Right cardiac atrium (tissue), 5 donors: ENCODE measurements at regions of chr1 and their contacts with region 1.

Region 1: DNA sequence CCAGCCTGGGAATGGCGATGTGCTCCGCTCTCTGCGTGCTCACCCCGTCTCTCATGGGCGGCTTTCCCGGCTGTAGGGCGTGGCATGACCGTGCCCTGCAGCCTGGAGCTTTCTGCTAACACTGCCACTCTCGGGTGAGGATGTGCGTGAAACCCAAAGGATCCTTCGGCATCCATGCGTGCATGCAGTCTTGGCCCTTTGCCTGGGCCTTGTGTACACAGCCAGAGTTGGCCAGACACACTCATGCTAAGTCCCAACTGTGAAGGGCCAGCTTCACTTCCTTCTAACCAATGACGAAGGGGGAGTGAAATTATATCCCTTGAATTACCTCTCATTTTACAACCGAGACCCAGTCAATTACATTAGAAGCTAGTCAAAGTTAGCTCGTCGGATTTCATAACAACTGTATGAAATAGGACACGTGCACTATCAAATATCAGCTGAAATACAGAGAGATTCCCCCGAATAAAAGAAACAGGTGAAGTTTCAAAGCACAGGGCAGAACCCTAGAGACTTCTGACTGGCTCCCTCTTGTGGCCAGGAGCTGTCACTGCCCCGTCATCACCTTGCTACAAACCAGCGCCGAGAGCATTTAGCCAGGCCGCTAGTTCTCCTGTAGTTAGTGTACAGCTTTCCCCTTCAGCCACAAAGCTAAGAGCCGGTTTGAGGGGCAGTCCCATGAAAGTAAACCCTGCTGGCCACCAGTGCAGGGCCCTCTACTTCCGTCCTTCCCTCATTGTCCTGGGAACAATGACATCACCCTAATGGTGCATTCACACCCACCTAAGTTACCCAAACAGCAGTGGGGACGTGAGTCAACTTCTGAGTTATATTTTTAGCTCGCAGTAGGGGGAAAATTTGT is 63.4 kb upstream of the COA6 start:
- DNase-seq: peak; percentile 31 to 83 (median 63)
- ATAC-seq: peak; percentile 69 to 78
- H3K4me3 ChIP-seq: no peak overlapping the region
- H3K27ac ChIP-seq: no peak overlapping the region
- H3K4me1 ChIP-seq: no peaks in the 10 kb centered on the region
- H3K27me3 ChIP-seq: no peaks in the 10 kb centered on the region

Region 2: GRCh38 chr1:234114648-234115307 is 195.1 kb before region 1 on chr1:
- intact Hi-C with region 1: loop called in 1 of 4 experiments (anchors 5 kb)
- DNase-seq: no peak
- ATAC-seq: no peak
- H3K4me3 ChIP-seq: no peak overlapping the region
- H3K27ac ChIP-seq: no peak overlapping the region
- H3K4me1 ChIP-seq: no peaks in the 10 kb centered on the region
- H3K27me3 ChIP-seq: no peaks in the 10 kb centered on the region

Region 3: DNA sequence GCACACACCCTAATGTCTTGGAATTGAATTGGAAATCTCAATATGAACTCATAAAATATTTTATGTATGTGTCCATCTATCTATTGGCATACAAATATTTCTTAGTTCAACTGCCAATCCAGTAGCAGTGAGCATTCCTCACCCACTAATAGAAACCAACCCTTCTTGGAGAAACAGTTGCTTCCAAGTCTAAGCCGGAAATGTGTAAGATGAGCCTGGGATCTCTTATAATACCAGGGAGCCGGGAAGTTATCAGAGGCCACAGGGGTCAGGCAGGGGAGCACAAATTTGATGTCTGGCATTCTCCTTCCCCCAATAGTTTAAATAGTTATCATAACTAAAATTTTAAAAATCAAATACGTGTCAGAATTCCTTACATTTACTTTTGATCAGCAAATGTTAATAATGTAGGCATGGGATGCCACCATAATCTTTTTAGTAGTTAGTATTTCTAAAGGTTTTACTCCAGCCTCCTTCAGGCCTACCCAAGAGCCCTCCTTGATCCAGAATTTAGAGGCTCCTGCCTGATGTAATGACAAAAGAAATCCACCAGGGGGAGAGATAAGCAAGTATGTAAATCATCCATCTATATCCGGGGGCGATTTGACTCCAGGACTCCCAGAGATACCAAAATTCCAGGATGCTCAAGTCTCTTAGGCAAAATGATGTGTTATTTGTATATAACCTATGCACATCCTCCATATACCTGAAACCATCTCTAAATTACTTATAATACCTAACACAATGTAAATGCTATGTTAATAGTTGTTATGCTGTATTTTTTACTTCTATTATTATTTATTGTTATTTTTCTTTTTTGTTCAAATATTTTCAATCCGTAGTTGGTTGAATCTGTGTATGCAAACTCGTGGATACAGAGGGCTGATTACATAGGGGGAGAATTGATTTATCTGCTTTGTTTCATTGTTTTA is 155.2 kb before region 1 on chr1:
- intact Hi-C with region 1: loop called in 2 of 4 experiments (anchors 10 kb)
- DNase-seq: no peak
- ATAC-seq: no peak
- H3K4me3 ChIP-seq: no peak overlapping the region
- H3K27ac ChIP-seq: no peak overlapping the region
- H3K4me1 ChIP-seq: no peaks in the 10 kb centered on the region
- H3K27me3 ChIP-seq: no peaks in the 10 kb centered on the region